Uterus (tissue), 4 donors: ENCODE measurements at regions of chr6 and their contacts with region 1.

Region 1: DNA sequence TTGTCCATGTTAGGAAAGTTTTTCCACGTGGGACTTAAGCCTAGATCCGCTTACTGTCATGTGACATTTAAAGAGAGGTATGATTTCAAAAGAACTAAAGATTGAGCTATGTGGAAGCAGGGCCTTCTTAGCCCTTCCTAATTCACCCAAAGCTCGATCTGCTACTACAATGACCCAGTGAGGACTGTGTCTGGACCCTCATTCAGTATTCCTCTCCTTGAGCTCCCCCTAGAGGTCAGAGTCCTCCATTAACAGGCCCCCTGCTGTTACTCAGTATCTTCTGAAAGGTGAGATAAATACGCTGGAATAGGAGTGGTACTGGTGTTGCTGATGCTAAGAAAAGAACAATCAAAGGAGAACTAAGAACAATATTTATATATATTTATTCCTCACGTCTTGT is 414.0 kb downstream of the GJA1 start:
- DNase-seq: peak; percentile 42 to 74
- H3K4me3 ChIP-seq: no peak overlapping the region
- H3K27ac ChIP-seq: no peak overlapping the region
- H3K4me1 ChIP-seq: no peaks in the 10 kb centered on the region
- H3K27me3 ChIP-seq: no peaks in the 10 kb centered on the region
- CTCF ChIP-seq: peak; percentile 58 to 78 (median 70)
- POLR2A ChIP-seq: no peak

Region 2: DNA sequence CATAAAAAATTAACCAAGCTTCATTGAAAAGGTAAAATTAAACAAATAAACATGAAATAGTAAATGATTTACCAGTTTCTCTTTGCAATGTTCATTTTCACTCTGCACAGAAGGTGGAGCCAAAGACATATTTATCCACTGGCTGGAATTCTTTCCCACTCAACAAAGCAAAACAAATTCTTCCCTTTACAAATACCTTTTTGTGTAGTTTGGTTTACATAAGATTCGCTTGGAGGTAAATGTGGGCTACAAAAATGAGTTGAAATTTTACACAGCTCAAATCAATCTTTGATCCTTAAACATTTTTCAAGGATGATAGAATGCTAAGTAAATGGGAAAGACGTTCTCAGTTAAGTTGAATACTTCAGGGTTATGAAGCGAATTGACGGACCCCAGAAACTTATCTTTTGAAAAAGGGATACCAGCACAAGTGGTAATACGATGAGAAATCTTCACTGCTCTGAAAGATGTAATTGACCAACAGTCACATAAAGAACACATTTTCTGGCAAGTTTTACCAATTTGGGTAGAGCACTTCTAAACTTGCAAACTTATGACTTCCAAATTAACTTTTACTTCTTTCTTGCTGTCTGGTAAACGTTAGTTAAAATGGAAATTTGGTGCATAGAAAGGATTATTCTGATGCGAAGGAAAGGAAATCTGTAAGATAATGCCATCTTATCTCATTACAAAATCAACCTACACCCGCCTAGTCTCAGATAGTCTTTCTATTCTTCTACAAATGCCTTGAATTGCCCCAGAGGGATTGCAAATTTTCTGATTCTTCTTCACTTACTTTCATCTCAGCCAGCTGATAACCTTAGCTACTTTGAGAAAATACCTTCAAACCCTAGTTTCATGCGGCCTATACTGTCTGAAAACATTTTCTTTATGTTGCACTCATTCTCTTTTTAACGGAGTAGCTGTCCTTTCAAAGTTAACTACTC is 418.7 kb before region 1 on chr6:
- intact Hi-C with region 1: loop called (anchors 10 kb)
- DNase-seq: no peak
- H3K4me3 ChIP-seq: no peak overlapping the region
- H3K27ac ChIP-seq: no peak overlapping the region
- H3K4me1 ChIP-seq: no peaks in the 10 kb centered on the region
- H3K27me3 ChIP-seq: no peaks in the 10 kb centered on the region
- CTCF ChIP-seq: peak; percentile 70 to 87 (median 74)
- POLR2A ChIP-seq: no peak